ENCODE measurements at regions of chr3 and their contacts with region 1.

Region 1: DNA sequence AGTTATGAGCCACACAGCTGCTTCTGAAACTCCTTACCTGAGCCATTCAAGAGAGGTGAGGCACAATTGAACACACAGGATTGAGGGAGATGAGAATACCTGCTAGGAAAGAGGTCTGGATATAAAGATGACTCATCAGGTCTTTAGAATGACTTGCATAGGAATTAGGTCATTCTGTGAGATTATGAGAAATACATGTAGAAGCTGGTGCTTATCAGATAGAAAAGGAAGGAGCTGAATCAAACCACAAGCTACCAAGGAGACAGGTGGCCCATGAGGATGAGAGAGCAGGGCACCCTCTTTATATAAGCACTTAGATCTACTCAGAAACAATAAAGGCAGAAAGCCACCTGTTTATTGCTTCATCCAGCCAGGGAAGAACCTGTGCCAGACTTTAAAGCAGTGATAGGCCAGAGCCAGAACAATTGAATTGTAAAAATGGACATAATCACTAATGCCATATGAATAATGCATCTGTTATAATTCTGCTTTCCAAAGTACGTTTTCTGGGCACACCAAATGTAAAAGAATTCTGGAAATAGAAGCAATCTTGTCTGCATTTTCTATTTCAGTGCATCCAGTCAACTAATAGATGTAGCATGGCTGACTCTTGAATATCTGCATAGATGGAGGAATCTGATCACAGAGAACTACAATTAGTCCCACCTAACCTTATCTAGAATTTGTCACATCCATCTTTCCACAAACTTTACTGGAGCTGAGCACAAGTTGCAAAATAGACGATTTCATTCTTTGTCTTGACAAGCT is 74.9 kb downstream of the PIK3R4 start:
- DNase-seq: no peak

Region 2: DNA sequence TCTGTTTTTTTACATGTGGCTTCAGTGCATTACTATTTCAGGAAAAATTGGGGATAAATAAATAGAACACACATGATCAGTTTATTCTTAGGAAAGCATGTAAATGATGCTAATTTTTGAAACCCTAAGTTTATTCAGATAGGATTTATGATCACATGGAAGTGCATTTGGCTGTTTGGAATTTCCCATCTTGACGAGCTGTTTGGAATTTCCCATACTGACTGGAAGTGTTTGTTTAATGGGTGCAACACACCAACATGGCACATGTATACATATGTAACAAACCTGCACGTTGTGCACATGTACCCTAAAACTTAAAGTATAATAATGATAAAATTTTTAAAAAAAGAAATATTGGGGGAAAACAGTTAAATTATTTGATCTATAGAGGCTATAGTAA is 75.2 kb before region 1 on chr3:
- intact Hi-C with region 1: no loop called
- DNase-seq: no peak

Region 3: DNA sequence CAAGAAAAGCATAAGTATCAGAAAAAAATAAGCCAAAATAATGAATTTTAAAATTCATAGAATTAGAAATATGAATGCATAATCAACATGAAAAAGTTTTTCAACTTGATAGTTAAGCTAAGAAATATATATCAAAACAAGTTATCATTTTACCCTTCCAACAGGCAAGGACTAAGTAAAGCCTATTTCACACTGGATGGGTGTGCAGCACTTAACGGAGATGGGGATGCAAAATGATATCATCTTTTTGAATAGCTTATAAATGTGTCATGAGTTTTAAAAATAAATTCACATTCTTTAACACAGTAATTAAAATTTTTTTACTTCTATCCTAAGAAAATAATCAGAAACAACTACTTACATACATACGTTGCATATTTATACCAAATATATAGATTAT is 54.0 kb after region 1 on chr3:
- intact Hi-C with region 1: no loop called
- DNase-seq: no peak

Region 4: DNA sequence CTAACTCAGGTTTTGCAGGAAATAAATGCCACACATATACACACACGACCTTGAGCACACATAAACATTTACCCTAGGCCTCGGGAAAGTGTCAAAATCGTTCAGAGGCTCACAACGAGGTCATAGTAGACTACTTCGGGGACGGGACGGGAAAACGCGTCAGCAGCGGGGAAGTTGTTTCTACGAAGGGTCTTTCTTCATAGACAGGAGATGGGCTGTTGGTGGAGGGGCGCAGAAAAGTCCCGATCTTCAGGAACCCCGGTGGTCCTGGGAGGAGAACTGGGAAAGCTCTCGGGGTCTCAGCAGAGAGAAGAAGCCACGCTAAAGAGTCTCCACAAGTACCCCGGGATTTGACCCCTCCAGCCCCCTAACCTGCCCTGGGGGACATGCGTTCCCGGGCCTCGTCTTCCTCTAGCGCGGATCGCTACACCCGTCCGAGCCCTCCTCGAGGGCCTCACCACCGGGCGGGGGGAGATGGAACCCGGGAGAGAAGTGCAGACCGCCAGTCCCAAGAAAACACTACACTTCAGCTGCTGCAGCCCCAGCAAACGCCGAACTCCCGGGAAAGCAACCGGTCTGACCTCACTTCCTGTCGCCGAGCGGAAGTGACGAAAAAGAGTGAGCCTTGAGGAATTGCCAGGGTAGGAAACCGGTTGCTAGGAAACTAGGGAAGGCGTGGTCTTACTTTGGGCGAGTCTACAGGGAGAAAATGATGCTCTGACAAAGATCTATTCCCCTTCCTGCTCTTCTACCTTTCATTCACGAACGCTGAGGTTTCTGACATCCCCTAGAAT is 74.7 kb after region 1 on chr3 and contains the start of gene PIK3R4:
- intact Hi-C with region 1: loop called in 1 of 2 experiments (anchors 2 kb)
- DNase-seq: peak; percentile 96
- total RNA-seq, gene PIK3R4: 26.1 to 27.9 TPM

Region 5: DNA sequence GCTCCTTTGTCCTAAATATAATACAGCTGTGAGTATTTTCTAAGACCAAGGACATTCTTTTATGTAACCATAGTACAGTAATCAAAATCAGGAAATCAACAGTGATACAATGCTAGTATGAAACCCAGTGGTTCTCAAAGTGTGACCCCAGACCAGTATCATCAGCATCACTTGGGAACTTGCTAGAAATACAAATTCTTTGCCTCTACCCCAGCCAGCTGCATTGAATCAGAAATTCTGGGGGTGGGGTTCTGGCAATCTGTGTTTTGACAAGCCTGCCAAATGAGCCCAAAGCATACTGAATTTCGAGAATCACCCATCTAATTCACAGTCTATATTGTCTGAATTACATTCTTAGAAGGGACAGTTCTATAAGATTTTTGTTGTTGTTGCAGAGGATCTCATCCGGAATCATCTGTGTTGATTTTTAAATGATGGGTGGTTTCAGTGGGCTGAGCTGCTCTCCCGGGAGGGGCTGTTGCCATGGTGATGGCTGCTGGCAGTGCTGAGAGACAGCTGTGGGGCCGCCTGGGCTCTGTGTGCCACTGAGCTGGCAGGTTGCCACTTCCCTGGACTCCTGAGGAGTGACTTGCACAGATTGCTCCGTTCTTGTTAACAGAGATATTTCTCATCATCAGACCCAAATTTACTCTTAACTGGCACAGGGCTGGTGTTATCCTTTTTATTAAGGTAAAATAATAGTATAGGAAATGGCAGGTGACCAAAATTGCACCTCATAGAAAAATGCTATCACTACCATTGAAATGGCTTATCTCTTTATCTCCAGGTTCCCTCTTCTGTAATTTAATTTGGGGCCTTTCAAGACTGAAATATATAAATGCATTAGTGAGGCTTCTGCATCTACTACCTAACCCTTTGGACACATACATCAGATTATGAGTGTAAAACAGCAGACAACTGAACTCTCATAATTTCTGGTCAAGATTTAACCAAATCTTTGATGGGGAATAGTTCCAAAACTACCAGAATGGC is 411.4 kb after region 1 on chr3:
- intact Hi-C with region 1: no loop called
- DNase-seq: no peak